Activated CD4-positive, alpha-beta T cell treated with anti-CD3 and anti-CD28 coated beads, Interleukin-2, amount 10 ng/mL, durations not matched to agents 24 days and 14 days (primary cell): ENCODE measurements at regions of chr19 and their contacts with region 1.

Region 1: GRCh38 chr19:3544742-3545668 is 6.0 kb downstream of the TEKTIP1 start:
- DNase-seq: peak; percentile 95
- H3K4me3 Mint-ChIP-seq: no peak overlapping the region
- H3K27ac Mint-ChIP-seq: no peak overlapping the region
- H3K4me1 Mint-ChIP-seq: peaks cover 8% of the 10 kb centered on the region
- H3K27me3 Mint-ChIP-seq: no peaks in the 10 kb centered on the region

Region 2: DNA sequence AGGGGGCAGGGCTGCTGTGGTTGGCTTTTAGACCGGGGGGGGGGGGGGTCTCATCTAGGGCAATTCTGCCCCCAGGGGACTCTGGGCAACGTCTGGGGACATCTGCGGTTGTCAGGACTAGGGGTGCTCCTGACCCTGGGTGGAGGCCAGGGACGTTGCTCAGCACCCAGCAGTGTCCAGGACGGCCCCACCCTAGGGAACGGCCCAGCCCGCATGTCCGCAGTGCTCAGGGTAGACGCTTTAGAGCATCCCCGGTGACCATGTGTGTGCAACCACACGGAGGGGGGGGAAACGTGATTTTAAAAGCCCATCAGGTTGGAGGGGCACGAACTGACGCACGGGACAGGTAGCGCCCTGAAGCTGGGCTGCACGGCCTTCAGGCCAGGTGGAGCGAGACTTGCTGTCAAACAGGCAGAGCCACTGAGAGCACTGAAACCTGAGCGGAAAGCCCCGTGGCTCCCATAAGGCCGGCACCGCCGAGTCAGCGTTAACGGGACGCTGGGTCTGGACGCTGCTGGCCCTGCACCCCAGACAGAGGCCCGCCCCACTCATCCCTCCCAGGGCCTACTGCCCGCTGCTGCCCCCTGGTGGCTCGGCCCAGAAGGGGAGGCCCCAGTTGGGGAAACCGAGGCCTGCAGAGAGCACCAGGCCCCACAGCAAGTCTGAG is 73.3 kb after region 1 on chr19:
- intact Hi-C with region 1: loop called (anchors 1 kb)
- DNase-seq: peak; percentile 87
- H3K4me3 Mint-ChIP-seq: no peak overlapping the region
- H3K27ac Mint-ChIP-seq: no peak overlapping the region
- H3K4me1 Mint-ChIP-seq: peaks cover 5% of the 10 kb centered on the region
- H3K27me3 Mint-ChIP-seq: no peaks in the 10 kb centered on the region

Region 3: GRCh38 chr19:3710265-3710812 is 165.3 kb after region 1 on chr19:
- intact Hi-C with region 1: loop called (anchors 5 kb)
- DNase-seq: no peak
- H3K4me3 Mint-ChIP-seq: no peak overlapping the region
- H3K27ac Mint-ChIP-seq: no peak overlapping the region
- H3K4me1 Mint-ChIP-seq: peaks cover 5% of the 10 kb centered on the region
- H3K27me3 Mint-ChIP-seq: peaks cover 13% of the 10 kb centered on the region

Region 4: GRCh38 chr19:3798137-3798536 is 253.1 kb after region 1 on chr19:
- intact Hi-C with region 1: no loop called
- DNase-seq: peak; percentile 79
- H3K4me3 Mint-ChIP-seq: peak overlapping the region; percentile 58
- H3K27ac Mint-ChIP-seq: peak overlapping the region; percentile 52
- H3K4me1 Mint-ChIP-seq: peaks cover 18% of the 10 kb centered on the region
- H3K27me3 Mint-ChIP-seq: peaks cover 4% of the 10 kb centered on the region